ENCODE measurements at regions of chr18 and their contacts with region 1.

Region 1: GRCh38 chr18:35240664-35241447 is at the start of gene ZNF397:
- DNase-seq: peak; percentile 99
- ATAC-seq: peak; percentile 98
- H3K4me3 ChIP-seq: peak within 1 kb of the TSS; percentile 61
- H3K27ac ChIP-seq: peak within 1 kb of the TSS; percentile 87
- H3K4me1 ChIP-seq: peaks cover 3 to 11% of the 10 kb centered on the region in 2 experiments
- H3K27me3 ChIP-seq: no peaks in the 10 kb centered on the region
- CTCF ChIP-seq: 0 out of 6 replicates have a peak, but pooled peaks of 1 of the 3 experiments have one; percentile 7
- EP300 ChIP-seq: peak; percentile 11; the same call in 1 of the 2 replicates
- POLR2A ChIP-seq: peak; percentile 97
- RAD21 ChIP-seq: peak; percentile 16 to 21; a peak in 2 of 4 replicates
- polyA plus RNA-seq, gene ZNF397: 6.4 to 8.7 TPM

Region 2: DNA sequence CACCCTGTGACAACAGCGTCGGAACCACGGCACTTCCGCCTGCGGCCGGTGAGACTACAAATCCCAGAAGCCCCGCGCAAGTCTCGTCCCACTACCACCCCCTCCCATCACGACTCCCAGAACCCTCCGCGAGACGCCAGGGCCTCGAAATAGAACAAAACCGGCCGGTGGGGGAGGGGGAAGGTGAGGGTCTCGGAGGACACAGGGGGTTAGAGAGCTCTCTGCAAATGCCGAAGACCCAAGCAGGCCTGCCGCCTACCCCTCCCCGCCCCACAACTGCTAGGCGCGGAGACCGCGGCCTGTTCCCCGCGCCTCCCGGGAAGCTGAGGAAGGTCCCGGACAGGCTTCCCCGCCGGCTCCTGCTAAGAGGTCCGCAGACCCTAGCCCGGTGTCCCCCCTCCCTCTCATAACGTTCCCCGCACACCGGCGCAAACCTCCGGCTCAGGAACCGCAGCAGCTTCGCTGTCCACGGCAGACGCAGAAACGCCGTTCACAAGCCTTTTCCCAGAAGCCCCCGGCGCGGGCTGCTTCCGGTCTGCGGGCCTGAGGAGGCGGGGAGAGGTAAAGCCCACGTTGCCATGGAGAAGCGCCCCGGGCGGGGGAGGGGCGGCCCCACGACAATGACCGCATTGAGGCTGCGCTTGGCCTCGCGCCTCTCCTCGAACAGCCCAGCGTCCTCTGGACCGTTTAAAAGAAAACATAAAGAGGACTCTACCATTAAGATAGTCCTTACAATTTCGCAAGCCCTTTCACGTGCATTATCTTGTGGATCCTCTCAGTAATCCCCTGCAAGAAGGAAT is 103.3 kb after region 1 on chr18 and contains the start of gene ZNF24:
- CTCF ChIA-PET with region 1: no interaction called
- POLR2A ChIA-PET with region 1: interaction called, 3 read pairs
- in situ Hi-C with region 1: no loop called
- intact Hi-C with region 1: loop called (anchors 5 kb)
- DNase-seq: peak; percentile 98
- ATAC-seq: peak; percentile 97
- H3K4me3 ChIP-seq: peak within 1 kb of the TSS; percentile 91
- H3K27ac ChIP-seq: peak within 1 kb of the TSS; percentile 99
- H3K4me1 ChIP-seq: peaks cover 8 to 10% of the 10 kb centered on the region in 2 experiments; a peak in 4 of 5 replicates
- H3K27me3 ChIP-seq: no peaks in the 10 kb centered on the region
- CTCF ChIP-seq: no peak
- EP300 ChIP-seq: peak; percentile 4; the same call in 1 of the 2 replicates
- POLR2A ChIP-seq: peak; percentile 98
- RAD21 ChIP-seq: no peak; a peak in 1 of 4 replicates
- polyA plus RNA-seq, gene ZNF24: 51.6 to 72.2 TPM

Measured in K562 (cell line).